ENCODE measurements at regions of chr6 and their contacts with region 1.

Region 1: DNA sequence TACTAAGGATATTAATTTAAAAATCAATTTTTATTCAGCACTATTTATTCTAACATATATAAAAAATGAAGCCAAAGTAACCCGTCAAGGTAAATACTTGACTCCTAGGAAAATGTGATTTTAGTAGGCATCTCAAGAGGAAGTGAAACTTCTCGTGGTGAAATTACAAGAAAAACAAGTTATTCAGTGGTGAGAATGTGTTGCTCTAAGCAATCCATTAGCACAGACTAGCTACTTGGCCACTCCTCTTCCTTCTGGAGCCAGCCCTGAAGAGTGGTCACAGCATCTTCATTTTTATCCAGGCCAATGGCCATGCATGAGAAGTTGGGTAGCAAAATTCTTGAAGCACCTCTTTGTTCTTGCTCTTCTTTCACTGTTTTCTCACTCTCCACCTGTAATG is 40.4 kb upstream of the GFRAL start:
- DNase-seq: no peak
- ATAC-seq: no peak
- H3K4me3 ChIP-seq: no peak overlapping the region
- H3K4me3 Mint-ChIP-seq: no peak overlapping the region
- H3K27ac ChIP-seq: no peak overlapping the region
- H3K27ac Mint-ChIP-seq: no peak overlapping the region
- H3K4me1 ChIP-seq: no peaks in the 10 kb centered on the region
- H3K4me1 Mint-ChIP-seq: no peaks in the 10 kb centered on the region
- H3K27me3 ChIP-seq: no peaks in the 10 kb centered on the region
- H3K27me3 Mint-ChIP-seq: no peaks in the 10 kb centered on the region
- CTCF ChIP-seq: no peak

Region 2: DNA sequence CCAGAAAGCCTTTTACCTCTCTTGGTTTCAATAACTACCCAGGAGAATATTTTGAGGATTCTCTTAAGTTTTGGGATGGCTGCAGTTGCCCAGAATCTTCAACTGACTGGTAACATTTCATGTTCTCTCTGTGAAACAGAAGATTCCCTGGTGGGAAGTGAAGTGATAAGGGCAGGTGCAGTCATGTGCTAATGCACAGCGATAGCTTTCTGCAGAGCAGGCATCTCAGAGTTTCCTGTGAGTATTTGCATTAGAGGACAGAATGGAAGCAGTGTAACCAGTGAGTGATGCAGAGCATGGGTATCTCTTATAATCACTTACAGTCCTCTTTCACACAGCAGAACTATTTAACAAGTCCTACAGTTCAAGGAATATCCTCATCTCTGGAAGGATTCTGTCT is 36.4 kb before region 1 on chr6:
- CTCF ChIA-PET with region 1: no interaction called
- POLR2A ChIA-PET with region 1: no interaction called
- intact Hi-C with region 1: loop called in 1 of 2 experiments (anchors 2 kb)
- DNase-seq: no peak
- ATAC-seq: no peak
- H3K4me3 ChIP-seq: no peak overlapping the region
- H3K4me3 Mint-ChIP-seq: no peak overlapping the region
- H3K27ac ChIP-seq: no peak overlapping the region
- H3K27ac Mint-ChIP-seq: no peak overlapping the region
- H3K4me1 ChIP-seq: no peaks in the 10 kb centered on the region
- H3K4me1 Mint-ChIP-seq: no peaks in the 10 kb centered on the region
- H3K27me3 ChIP-seq: no peaks in the 10 kb centered on the region
- H3K27me3 Mint-ChIP-seq: no peaks in the 10 kb centered on the region
- CTCF ChIP-seq: no peak

Region 3: GRCh38 chr6:55304747-55305146 is 17.9 kb after region 1 on chr6:
- CTCF ChIA-PET with region 1: no interaction called
- POLR2A ChIA-PET with region 1: no interaction called
- intact Hi-C with region 1: no loop called
- DNase-seq: no peak
- ATAC-seq: no peak
- H3K4me3 ChIP-seq: no peak overlapping the region
- H3K4me3 Mint-ChIP-seq: no peak overlapping the region
- H3K27ac ChIP-seq: no peak overlapping the region
- H3K27ac Mint-ChIP-seq: no peak overlapping the region
- H3K4me1 ChIP-seq: no peaks in the 10 kb centered on the region
- H3K4me1 Mint-ChIP-seq: no peaks in the 10 kb centered on the region
- H3K27me3 ChIP-seq: no peaks in the 10 kb centered on the region
- H3K27me3 Mint-ChIP-seq: no peaks in the 10 kb centered on the region
- CTCF ChIP-seq: no peak

Measured in CD4-positive, alpha-beta T cell (primary cell).